ENCODE measurements at regions of chr4 and their contacts with region 1.

Region 1: DNA sequence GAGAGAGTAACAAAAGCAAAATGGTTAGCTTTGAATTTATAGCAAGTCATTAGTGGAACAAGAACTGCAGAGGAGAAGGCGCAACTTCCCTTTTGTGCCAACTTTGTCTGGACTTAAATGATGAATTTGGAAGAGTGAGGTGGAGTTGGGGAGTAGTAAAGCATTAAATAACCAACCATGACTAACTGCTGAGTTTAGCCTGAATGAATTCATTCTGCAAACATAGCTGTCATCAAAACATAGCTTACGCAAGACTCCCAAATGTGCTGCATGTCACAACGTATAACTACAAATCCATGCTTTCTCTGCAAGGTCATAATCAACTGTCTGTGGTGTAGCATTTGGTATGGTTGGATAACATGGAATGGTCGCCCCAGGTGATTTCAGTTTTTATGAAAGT is 75.9 kb upstream of the RPL34 start:
- DNase-seq: peak; percentile 49
- H3K4me3 ChIP-seq: no peak overlapping the region
- H3K27ac ChIP-seq: no peak overlapping the region
- H3K4me1 ChIP-seq: no peaks in the 10 kb centered on the region
- H3K27me3 ChIP-seq: no peaks in the 10 kb centered on the region
- CTCF ChIP-seq: no peak

Region 2: GRCh38 chr4:108560616-108561015 is 16.1 kb after region 1 on chr4:
- CTCF ChIA-PET with region 1: no interaction called
- POLR2A ChIA-PET with region 1: no interaction called
- intact Hi-C with region 1: no loop called
- DNase-seq: no peak
- H3K4me3 ChIP-seq: no peak overlapping the region
- H3K27ac ChIP-seq: no peak overlapping the region
- H3K4me1 ChIP-seq: no peaks in the 10 kb centered on the region
- H3K27me3 ChIP-seq: no peaks in the 10 kb centered on the region
- CTCF ChIP-seq: no peak

Region 3: DNA sequence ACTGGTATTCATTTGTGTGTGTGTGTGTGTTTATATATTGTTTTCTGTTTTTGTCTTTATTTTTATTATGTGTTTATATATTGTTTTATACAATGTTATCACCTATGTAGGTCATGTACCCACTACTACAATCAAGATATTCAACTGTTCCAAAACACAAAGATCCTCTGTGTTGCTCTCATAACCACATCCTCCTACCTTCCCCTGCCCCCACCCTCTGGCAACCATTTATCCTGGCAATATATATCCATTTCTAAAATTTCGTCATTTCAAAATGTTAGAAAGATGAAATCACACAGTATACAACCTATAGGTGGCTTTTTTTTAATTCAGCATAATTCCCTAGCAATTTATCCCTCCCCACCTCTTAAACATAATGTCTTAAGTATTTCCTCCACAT is 57.1 kb after region 1 on chr4:
- CTCF ChIA-PET with region 1: no interaction called
- POLR2A ChIA-PET with region 1: interaction called, 18 read pairs
- intact Hi-C with region 1: no loop called
- DNase-seq: no peak
- H3K4me3 ChIP-seq: no peak overlapping the region
- H3K27ac ChIP-seq: no peak overlapping the region
- H3K4me1 ChIP-seq: no peaks in the 10 kb centered on the region
- H3K27me3 ChIP-seq: no peaks in the 10 kb centered on the region
- CTCF ChIP-seq: no peak

Region 4: DNA sequence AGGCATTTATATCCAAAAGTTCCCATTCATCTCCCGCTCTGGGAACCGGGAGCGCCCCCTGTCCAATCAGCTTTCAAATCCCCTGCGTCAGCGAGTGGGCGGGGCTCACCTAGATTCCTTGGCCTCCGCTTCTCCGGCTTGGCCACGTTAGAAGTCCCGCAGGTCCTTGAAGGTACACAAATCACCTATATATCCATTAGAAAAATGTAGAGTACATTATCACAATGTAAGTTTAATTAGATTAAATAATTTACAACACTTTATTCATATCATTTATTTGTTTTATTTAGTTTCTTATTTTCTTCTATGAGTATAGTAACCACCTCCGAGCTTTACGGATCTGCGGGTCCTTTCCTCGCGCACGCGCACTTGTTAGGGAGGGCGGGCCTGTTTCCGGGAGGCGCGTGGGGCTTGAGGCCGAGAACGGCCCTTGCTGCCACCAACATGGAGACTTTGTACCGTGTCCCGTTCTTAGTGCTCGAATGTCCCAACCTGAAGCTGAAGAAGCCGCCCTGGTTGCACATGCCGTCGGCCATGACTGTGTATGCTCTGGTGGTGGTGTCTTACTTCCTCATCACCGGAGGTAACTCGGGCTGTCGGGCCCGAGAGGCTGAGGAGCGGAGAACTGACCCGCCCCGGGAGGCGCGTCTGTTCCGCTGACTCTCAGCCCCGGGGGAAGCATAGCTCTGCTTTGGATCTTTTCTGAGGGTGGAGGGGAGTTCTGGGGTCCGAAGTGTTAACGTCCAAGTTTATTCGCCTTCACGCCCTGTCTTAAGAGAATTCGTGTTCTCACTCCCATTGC is 105.9 kb after region 1 on chr4 and contains the start of gene OSTC:
- CTCF ChIA-PET with region 1: no interaction called
- POLR2A ChIA-PET with region 1: no interaction called
- intact Hi-C with region 1: no loop called
- DNase-seq: peak; percentile 99
- H3K4me3 ChIP-seq: peak within 1 kb of the TSS; percentile 94
- H3K27ac ChIP-seq: peak within 1 kb of the TSS; percentile 90
- H3K4me1 ChIP-seq: peaks cover 10% of the 10 kb centered on the region
- H3K27me3 ChIP-seq: no peaks in the 10 kb centered on the region
- CTCF ChIP-seq: 0 out of 2 replicates have a peak, but pooled peaks have one; percentile 12
- total RNA-seq, gene OSTC: 130 and 137 TPM in 2 replicates